BJ (cell line): ENCODE measurements at regions of chr3 and their contacts with region 1.

Region 1: DNA sequence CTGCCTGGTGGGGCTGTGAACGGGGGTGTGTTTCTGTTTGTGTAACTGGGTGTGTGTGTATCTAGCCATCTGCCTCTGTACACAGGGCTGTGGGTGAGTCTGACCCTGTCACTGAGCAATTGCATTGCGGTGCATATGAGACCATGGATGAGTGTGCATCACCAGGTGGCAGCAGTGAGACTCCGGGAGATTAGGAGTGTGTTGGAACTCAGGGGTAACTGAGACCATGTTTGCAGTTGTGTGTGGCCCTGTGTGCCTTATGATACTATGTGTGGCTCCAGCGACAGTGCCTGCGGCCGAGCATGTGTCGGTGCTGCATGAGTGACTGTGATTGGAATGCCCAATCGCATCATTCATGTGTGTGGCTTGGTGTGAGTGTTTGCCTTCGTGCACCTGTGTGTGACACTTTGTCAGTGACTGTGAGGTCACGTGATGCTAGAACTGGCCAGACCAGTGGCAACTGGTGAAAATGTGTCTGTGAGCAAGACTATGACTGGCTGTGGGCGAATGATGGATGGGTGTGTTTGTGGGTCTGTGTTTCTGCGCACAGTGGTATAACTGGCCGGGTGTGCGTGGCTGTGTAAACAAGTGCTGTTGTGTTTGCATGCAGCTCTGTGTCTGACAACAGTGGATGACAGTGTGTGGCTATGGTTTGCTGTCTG is 14.0 kb downstream of the VILL start:
- DNase-seq: no peak
- H3K4me3 ChIP-seq: no peak overlapping the region
- H3K27me3 ChIP-seq: no peaks in the 10 kb centered on the region
- CTCF ChIP-seq: peak; percentile 79

Region 2: GRCh38 chr3:37855363-37855970 is 149.1 kb before region 1 on chr3:
- CTCF ChIA-PET with region 1: interaction called, 66 read pairs
- POLR2A ChIA-PET with region 1: no interaction called
- DNase-seq: no peak
- H3K4me3 ChIP-seq: no peak overlapping the region
- H3K27me3 ChIP-seq: no peaks in the 10 kb centered on the region
- CTCF ChIP-seq: peak; percentile 85

Region 3: DNA sequence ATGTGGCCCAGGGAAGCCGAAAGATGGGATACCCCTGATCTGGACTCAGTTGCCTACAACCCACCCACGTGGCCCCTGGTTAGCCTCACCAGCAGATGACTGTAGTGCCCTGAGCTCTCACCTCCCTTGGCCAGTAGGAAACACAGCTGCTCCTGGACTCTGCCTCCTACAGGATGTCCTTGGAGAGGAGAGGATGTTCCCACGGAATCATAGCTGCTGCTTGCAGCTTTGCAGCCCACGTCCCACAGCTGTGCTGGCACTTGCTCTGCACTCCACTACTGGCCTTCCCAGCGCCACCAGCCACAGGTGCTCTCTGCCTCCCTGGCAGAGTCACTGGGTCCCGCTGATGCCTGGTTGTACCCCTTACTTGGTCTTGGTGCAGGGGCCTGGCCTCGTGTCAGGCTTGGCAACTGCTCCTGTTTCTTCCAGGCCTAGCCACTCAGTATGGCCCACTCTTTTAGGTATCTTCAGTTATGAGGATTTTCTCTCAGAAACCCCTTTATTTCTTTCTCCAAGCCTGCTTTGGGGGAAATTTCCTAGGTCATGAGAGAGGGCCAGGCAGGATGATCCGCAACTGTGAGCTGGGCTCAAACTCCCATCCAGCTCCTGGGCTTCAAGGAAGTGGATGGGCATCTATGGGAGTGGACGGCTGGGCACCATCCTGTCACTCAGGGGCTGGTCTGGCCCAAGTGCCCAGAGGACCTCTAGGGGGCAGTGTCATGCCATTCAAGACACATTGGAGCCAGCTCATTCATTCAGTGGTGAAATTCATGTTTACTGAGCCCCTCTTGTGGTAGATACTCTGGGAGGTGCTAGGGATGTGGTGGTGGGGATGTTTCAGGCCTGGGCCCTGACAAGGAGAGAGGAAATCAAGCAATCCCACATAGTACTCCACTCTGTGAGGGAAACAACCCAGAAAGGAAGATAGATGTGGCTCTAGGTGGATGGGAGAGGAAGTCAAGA is 30.1 kb before region 1 on chr3:
- CTCF ChIA-PET with region 1: interaction called, 13 read pairs
- POLR2A ChIA-PET with region 1: no interaction called
- DNase-seq: no peak
- H3K4me3 ChIP-seq: no peak overlapping the region
- H3K27me3 ChIP-seq: no peaks in the 10 kb centered on the region
- CTCF ChIP-seq: peak; percentile 79

Region 4: DNA sequence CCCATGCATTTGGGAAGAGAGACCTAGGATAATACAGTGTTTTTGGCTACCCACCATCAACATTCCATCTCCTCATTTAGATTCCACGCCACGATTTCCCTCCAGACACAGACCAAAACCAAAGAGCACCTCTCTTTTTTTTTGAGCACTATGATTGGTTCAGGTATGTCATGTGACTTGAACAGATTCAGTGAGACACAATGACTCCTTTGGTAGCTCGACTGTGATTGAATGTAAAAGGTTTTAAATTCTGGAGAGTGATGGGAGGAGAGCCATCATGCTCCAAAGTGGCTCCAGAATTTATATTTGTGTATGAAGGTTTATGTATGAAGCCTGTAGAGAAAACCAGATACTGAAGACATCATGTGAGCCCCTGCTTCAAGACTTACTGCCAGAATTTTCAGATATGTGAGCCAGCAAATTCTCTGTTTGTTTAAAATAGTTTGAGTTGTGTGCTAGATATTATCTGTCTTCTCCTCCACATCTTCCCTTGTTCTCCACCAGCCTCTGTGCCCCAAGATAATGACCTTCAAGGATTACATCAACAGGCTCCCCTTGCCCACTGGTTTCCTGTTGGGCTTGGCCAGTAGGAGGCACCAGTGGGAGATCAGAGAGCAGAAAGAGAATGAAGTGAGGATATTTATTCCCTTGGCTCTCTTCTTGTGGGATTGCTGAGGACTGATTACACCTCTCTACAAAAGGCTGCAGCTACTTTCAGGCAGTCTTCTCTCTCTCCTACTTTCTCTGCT is 146.4 kb after region 1 on chr3:
- CTCF ChIA-PET with region 1: no interaction called
- POLR2A ChIA-PET with region 1: no interaction called
- DNase-seq: no peak
- H3K4me3 ChIP-seq: no peak overlapping the region
- H3K27me3 ChIP-seq: peaks cover 2% of the 10 kb centered on the region; the same call in 1 of the 2 replicates
- CTCF ChIP-seq: no peak

Region 5: GRCh38 chr3:38164966-38165680 is 160.6 kb after region 1 on chr3 and contains the start of gene OXSR1:
- CTCF ChIA-PET with region 1: no interaction called
- POLR2A ChIA-PET with region 1: no interaction called
- DNase-seq: peak; percentile 99
- H3K4me3 ChIP-seq: peak within 1 kb of the TSS; percentile 74
- H3K27me3 ChIP-seq: no peaks in the 10 kb centered on the region
- CTCF ChIP-seq: no peak
- polyA plus RNA-seq, gene OXSR1: 27.6 and 43.6 TPM in 2 replicates

Region 6: GRCh38 chr3:38473229-38473628 is 468.7 kb after region 1 on chr3:
- CTCF ChIA-PET with region 1: no interaction called
- POLR2A ChIA-PET with region 1: no interaction called
- DNase-seq: no peak
- H3K4me3 ChIP-seq: no peak overlapping the region
- H3K27me3 ChIP-seq: no peaks in the 10 kb centered on the region
- CTCF ChIP-seq: no peak

Region 7: GRCh38 chr3:39110041-39110639 is 1105.6 kb after region 1 on chr3:
- CTCF ChIA-PET with region 1: no interaction called
- POLR2A ChIA-PET with region 1: no interaction called
- DNase-seq: no peak
- H3K4me3 ChIP-seq: no peak overlapping the region
- H3K27me3 ChIP-seq: no peaks in the 10 kb centered on the region
- CTCF ChIP-seq: no peak